ENCODE measurements at regions of chr19 and their contacts with region 1.

Region 1: GRCh38 chr19:28746478-28746877 is 466.5 kb downstream of the UQCRFS1 start:
- DNase-seq: no peak
- H3K4me3 ChIP-seq: no peak overlapping the region
- H3K27ac ChIP-seq: no peak overlapping the region
- H3K4me1 ChIP-seq: no peaks in the 10 kb centered on the region
- H3K27me3 ChIP-seq: no peaks in the 10 kb centered on the region
- CTCF ChIP-seq: no peak

Region 2: DNA sequence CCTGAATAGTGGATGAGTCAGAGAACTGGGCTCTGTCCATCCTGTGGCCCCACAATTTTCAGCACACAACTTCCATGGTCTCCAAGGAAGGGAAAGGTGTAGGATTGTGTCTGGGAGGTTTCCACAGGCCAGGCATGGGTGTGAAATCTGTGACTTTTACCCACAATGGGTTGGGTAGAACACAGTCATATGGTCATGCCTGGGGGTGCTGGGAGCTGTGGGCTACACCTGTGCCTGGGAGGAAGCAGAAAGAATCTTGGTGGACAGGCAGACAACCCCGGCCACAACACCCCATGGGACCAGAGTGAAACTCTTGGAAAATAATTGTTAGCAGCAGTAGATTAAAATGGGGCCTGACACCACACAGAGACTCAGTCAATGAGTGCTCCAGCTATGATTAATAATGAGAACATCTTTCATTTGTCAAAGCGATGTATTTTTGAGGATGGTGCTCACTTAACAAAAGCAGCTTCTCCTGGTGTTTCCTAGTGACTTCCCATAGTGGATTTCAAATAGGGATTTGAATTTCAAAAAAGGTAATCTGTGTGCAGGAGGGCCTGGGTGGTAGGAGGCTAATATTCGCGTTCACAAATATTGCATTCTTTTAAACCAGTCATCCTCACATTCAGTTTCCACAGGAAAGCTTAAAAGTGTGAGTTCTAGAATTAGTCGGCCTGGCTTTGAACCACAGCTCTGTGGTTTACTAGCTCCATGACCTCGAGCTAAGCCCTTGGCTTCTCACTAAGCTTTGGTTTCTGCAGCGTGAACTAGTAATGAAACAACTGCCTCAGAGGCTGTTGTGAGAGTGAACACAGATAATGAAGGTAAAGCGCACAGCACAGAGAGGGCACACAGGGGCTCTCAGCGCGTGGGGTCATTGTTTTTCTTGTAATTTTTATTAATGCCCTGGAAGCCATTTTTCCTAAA is 555.8 kb after region 1 on chr19:
- CTCF ChIA-PET with region 1: interaction called, 11 read pairs
- POLR2A ChIA-PET with region 1: no interaction called
- intact Hi-C with region 1: no loop called
- DNase-seq: no peak
- H3K4me3 ChIP-seq: no peak overlapping the region
- H3K27ac ChIP-seq: no peak overlapping the region
- H3K4me1 ChIP-seq: no peaks in the 10 kb centered on the region
- H3K27me3 ChIP-seq: no peaks in the 10 kb centered on the region
- CTCF ChIP-seq: no peak